BJ (cell line): ENCODE measurements at regions of chr13 and their contacts with region 1.

Region 1: DNA sequence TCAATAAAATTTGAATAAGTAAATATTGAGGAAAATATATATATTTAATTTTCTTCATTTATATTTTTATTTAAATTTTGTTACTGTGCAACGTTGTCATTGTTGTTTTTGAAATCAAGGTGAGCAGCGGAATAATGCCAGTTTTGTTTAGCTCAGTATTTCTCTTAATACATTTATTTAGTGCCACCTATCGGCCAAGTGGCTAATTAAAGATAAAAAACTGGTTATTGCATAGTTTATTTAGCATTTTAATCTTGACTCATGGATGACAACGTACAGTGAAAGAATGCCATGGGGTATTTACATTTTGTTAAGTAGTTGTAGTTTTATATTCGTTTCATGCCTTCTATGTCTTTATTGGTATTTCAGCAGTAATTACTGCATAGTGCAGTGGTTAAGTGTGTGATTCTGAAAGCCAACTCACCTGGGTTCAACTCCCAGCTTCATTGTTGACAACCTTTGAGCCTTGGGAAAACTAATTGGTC is 265.9 kb downstream of the MYO16 start:
- DNase-seq: no peak
- H3K4me3 ChIP-seq: no peak overlapping the region
- H3K27me3 ChIP-seq: no peaks in the 10 kb centered on the region
- CTCF ChIP-seq: peak; percentile 45

Region 2: DNA sequence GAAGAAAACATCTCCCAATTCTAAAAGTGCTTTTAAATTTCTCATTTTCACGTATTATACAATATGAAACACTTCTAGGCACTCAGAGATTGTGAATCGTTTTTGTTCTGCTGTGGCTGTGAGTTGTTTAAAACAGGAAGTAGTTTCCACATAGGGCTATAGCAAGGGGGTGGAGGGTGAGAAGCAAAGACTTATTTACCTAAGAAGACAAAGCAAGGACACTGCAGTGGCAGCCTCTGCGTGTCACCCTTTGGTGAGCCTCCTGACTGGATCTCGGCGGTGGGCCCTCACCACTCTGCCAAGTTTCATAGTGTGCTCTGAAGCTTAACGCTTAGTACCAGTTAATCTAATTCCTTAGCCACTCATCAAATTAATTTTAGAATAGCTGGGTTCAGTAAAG is 569.0 kb before region 1 on chr13:
- CTCF ChIA-PET with region 1: interaction called, 19 read pairs
- POLR2A ChIA-PET with region 1: no interaction called
- DNase-seq: no peak
- H3K4me3 ChIP-seq: no peak overlapping the region
- H3K27me3 ChIP-seq: no peaks in the 10 kb centered on the region
- CTCF ChIP-seq: no peak

Region 3: DNA sequence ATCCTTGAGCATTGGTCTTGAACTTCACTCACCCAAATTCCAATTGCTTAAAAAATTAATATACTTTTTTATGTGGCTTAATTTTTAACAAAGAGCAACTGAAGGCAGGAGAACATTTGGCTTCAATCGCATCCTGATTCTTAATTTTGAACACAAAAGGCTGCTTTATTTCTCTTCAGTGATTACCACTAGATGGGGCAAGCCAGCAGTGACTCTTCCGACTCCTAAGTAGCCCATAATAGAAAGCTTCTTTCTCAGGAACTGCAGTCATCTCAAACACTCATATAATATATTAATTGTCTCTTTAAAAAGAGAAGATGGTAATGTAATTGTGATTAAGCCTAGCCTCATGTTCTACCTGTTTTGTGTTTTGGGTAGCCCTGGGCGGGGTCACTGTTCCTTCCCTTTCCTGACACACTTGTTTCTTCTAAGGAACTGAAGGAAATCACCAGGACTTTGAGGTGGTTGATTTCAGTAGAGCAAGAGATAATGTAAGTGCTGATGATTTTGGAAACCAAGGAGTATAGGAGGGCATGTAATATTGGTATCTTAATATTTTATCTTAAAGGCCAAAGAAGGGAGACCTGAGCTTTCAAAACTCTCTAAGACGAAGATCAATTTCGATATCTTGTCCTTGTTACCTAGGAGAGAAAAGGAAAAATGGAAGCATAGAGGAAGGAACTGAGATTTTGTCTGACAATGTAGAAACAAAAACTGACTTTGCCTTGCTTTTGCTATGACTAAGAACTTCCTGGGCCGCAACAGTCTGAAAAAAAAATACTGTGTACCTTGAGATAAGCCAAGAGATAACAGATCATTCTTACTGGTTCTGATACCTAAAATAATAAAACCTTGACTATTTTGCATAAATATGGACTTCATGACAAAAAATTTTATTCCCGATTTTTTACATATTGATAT is 552.6 kb before region 1 on chr13:
- CTCF ChIA-PET with region 1: interaction called, 31 read pairs
- POLR2A ChIA-PET with region 1: no interaction called
- DNase-seq: no peak
- H3K4me3 ChIP-seq: no peak overlapping the region
- H3K27me3 ChIP-seq: no peaks in the 10 kb centered on the region
- CTCF ChIP-seq: peak; percentile 56

Region 4: DNA sequence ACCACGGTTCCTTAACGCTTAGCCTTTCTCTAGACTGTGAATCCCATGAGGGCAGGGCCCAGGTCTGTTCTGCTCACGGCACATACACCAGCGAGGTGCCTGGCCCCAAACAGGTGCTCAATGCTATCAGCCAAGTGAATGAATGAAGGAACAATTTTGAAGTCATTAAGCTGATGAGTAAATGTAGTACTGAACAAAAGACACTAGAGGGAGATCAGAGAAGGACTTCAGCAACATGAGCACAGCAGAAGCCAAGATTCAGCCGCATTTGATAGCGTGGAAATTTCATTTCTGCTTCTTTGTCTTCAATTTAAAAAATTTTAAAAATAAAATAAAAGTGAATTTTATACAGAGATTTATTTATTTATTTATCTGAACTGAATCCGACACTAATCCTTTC is 285.9 kb before region 1 on chr13:
- CTCF ChIA-PET with region 1: interaction called, 27 read pairs
- POLR2A ChIA-PET with region 1: no interaction called
- DNase-seq: peak; percentile 4
- H3K4me3 ChIP-seq: no peak overlapping the region
- H3K27me3 ChIP-seq: no peaks in the 10 kb centered on the region
- CTCF ChIP-seq: peak; percentile 42

Region 5: DNA sequence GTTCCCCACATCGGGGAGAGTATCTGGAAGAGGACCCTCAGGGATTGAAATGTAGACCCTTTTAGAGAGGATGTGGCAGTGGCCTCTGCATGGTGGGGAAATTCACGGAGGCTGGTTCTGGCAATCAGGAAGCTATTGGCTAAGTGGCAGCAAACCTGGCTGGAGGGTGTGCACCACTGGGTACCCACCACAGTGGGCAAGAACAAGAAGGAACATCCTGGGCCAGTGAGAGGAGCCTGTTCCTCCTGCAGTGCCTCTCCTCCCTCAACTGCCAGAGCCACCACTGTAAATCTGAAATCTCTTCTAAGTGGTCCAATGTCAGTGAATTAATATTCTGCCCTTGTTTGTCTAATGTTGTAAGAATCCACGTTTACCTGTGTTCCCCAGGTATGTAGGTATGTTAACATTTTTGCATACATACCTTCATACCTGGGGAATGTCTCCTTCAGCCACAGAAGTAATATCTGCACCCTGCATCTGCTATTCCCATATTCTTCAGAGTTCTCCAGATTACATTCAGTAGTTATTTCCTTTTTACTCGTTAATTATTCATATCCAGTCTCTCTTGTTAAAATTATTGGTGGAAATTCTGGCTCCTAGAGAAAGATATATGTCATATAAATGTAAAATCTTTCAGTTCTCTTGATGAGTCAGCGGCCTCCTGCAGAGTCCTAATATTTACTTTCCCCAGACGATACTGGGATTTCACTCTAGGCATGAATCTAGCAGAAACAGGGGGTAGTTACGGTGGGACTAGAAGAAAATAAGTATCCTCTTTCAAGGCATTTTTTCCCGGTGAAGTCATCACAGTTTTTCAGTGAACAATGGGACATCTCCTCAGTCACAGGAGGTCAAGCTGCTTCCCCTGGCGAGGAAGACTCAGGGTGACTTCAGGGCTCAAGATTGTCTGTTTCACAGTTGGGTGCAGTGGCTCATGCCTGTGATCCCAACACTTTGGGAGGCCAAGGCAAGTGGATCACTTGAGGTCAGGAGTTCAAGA is 117.5 kb before region 1 on chr13:
- CTCF ChIA-PET with region 1: no interaction called
- POLR2A ChIA-PET with region 1: no interaction called
- DNase-seq: no peak
- H3K4me3 ChIP-seq: no peak overlapping the region
- H3K27me3 ChIP-seq: no peaks in the 10 kb centered on the region
- CTCF ChIP-seq: no peak

Region 6: DNA sequence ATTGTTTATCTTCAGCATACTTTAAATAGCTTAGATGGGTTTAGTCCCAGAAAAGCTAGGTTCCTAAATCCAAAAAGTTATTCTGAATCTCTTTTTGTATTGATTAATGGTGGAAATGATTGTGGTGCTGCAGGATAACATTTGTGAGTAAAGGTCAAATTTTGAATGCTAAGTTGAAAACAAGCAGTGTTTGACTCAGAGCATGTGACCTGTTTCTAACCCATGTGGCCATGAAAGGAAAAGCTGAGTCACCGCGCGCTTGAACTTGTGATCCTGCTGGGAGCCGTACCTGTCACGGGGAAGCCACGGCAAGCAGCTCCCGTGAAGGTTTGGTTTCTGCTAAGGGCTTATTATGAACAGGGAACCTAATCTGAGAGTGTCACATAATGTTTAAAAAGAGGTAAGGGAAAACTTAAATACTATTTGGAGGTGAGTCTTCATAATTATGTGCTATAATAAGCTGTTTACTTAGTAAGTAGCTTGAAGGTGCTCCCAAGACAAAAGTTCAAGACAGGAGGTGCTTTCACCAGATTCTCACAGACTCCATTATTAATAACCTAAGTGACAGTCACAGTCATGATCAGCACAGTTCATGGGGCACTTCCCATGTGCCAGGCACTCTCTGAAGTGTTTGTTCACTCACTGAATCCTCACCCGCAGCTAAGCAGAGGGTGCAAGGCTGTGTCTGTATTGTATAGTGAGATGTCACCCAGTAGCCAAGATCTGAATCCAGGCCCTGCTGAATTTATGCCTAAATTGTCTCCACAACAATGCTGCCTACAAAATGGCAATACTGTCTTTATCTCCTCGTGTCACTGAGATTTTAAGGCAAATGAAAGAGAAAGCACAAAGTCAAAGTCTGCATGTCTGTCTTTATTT is 20.6 kb after region 1 on chr13:
- CTCF ChIA-PET with region 1: interaction called, 10 read pairs
- POLR2A ChIA-PET with region 1: no interaction called
- DNase-seq: no peak
- H3K4me3 ChIP-seq: no peak overlapping the region
- H3K27me3 ChIP-seq: peaks cover 3% of the 10 kb centered on the region
- CTCF ChIP-seq: no peak

Region 7: GRCh38 chr13:109233293-109233692 is 338.0 kb after region 1 on chr13:
- CTCF ChIA-PET with region 1: no interaction called
- POLR2A ChIA-PET with region 1: no interaction called
- DNase-seq: no peak
- H3K4me3 ChIP-seq: no peak overlapping the region
- H3K27me3 ChIP-seq: no peaks in the 10 kb centered on the region
- CTCF ChIP-seq: no peak